ENCODE measurements at regions of chr10 and their contacts with region 1.

Region 1: GRCh38 chr10:102420810-102421644 is at the start of gene FBXL15:
- DNase-seq: peak; percentile 96
- H3K4me3 Mint-ChIP-seq: peak within 1 kb of the TSS; percentile 99
- H3K27ac Mint-ChIP-seq: peak within 1 kb of the TSS; percentile 98
- H3K4me1 Mint-ChIP-seq: peaks cover 34% of the 10 kb centered on the region
- H3K27me3 Mint-ChIP-seq: peaks cover 9% of the 10 kb centered on the region
- total RNA-seq, gene FBXL15: 14.5 and 18.5 TPM in 2 replicates

Region 2: GRCh38 chr10:102225646-102226541 is 195.1 kb before region 1 on chr10 and contains the start of gene ELOVL3:
- intact Hi-C with region 1: loop called (anchors 1 kb)
- DNase-seq: peak; percentile 87
- H3K4me3 Mint-ChIP-seq: peak within 1 kb of the TSS; percentile 63
- H3K27ac Mint-ChIP-seq: no peak within 1 kb of the TSS
- H3K4me1 Mint-ChIP-seq: peaks cover 21% of the 10 kb centered on the region
- H3K27me3 Mint-ChIP-seq: peaks cover 57% of the 10 kb centered on the region
- total RNA-seq, gene ELOVL3: 0.18 TPM in 1 of 2 replicates, not detected in the other

Region 3: DNA sequence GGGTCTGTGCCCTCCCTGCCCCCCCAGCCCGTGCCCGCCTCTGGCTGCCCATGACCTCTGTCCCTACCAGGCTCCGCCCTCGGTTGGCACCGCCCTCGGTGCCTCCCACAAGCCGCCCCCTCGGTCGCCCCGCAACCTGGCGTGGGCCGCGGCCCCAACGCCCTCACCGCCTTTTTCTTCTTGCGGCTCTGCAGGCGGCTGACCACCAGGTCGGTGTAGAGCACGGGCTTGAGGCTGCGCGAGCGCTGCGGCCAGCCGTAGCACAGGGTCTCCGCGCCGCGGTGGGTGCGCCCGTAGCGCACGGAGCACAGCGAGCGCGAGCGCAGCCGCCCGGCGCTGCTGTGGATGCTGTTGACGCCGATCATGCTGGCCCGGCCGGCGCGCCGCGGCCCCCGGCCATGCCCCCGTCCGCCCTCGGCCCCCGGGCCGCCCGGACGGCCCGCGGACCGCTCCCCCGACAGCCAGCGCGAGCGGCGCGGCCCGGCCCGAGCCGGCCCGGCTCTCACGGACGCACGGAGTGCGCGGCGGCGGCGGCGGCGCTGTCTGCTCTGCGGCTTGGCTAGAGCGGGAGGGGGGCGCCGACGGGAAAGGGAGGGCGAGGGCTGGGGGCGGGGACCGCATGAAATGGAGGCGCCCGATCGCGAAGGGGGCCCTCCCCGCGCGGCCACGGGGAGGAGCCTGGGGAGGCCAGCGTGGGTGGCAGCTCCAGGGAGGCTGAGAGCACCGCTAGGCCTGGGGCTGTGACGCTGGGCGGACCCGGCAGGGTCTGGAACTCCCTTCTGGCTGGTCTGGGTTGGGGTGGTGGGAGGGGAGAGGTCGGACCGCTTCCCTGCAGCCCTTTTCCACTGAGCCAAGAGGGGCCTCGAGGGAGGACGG is 12.1 kb before region 1 on chr10:
- intact Hi-C with region 1: loop called (anchors 1 kb)
- DNase-seq: peak; percentile 64
- H3K4me3 Mint-ChIP-seq: peak overlapping the region; percentile 87
- H3K27ac Mint-ChIP-seq: peak overlapping the region; percentile 81
- H3K4me1 Mint-ChIP-seq: peaks cover 54% of the 10 kb centered on the region
- H3K27me3 Mint-ChIP-seq: peaks cover 24% of the 10 kb centered on the region

Region 4: DNA sequence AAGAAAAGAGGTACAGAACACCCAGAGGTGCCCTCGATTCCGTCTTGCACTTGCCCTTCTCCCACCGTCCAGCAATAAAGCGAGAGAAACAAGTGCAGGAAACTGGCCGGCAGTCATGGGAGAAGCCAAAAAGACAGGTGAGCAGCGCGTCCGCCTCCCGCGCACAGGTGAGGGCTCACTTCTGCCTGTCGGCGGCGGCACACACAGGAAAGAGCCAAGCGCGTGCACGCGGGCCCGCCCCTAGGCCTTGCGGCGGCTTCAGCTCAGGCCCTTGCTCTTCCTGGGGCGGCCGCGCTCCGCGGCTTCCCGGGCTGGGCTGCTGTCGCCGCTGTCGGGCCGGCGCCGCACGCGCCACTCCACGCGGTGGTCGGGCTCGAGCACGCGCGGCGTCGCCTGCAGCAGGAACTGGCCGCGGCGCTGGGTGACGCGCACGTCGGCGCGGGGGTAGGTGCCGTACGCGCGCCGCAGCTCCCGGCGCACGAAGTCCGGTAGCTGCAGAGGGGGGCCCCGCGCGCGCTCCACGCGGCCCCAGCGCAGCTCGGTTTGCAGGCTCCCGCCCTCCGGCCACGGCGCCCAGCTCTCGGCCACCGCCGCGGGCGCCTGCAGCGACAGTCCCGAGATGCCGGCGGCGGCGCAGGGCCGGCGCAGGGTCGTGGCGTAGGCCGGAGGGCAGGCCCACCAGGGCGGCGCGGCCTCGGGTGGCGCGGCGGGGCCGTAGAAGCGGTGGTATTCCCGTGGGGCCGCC is 29.3 kb after region 1 on chr10:
- intact Hi-C with region 1: loop called (anchors 1 kb)
- DNase-seq: peak; percentile 88
- H3K4me3 Mint-ChIP-seq: peak overlapping the region; percentile 95
- H3K27ac Mint-ChIP-seq: peak overlapping the region; percentile 90
- H3K4me1 Mint-ChIP-seq: peaks cover 33% of the 10 kb centered on the region
- H3K27me3 Mint-ChIP-seq: no peaks in the 10 kb centered on the region

Region 5: GRCh38 chr10:102479651-102480050 is 58.6 kb after region 1 on chr10:
- intact Hi-C with region 1: loop called (anchors 1 kb)
- DNase-seq: no peak
- H3K4me3 Mint-ChIP-seq: no peak overlapping the region
- H3K27ac Mint-ChIP-seq: no peak overlapping the region
- H3K4me1 Mint-ChIP-seq: peaks cover 7% of the 10 kb centered on the region
- H3K27me3 Mint-ChIP-seq: no peaks in the 10 kb centered on the region

Measured in activated T-helper 1 cell treated with anti-CD3 and anti-CD28 coated beads, Interleukin-12 subunit alpha, Interleukin-12 subunit beta, Interleukin-2, Interleukin-4 antibody, amounts not matched to agents 30 ng/mL and 10 ng/mL and 1 ng/mL, durations not matched to agents 14 hours and 24 hours and 36 hours (primary cell).